BJ (cell line): ENCODE measurements at regions of chr4 and their contacts with region 1.

Region 1: DNA sequence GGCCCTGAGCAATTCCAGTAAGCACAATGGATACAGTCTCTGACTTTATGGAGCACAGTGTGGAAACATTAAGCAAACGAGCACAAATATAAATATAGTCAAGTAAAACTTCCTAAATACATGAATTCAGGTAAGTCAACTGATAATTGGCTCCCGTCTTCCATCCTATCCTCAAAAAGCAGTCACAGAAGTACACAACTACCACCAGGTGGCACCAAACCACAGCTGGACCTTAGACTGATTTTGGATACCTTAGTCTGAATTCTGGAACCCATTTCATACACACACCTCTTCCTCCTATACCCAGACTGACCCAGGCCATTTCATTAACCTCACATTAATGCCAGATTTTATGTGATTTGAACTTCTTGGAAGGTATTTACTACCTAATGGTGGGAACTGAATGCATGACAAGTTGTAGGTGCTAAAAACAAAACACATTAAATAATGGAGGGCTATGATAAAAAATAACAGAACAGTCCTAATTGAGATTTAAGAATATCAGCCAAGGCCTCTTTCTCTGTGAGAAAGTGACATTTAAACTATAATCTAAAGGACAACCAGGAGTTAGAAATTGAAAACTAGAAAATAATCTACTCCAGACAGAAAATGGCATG is 77.5 kb downstream of the ELF2 start:
- DNase-seq: no peak
- H3K4me3 ChIP-seq: no peak overlapping the region
- H3K27me3 ChIP-seq: no peaks in the 10 kb centered on the region
- CTCF ChIP-seq: peak; percentile 84

Region 2: DNA sequence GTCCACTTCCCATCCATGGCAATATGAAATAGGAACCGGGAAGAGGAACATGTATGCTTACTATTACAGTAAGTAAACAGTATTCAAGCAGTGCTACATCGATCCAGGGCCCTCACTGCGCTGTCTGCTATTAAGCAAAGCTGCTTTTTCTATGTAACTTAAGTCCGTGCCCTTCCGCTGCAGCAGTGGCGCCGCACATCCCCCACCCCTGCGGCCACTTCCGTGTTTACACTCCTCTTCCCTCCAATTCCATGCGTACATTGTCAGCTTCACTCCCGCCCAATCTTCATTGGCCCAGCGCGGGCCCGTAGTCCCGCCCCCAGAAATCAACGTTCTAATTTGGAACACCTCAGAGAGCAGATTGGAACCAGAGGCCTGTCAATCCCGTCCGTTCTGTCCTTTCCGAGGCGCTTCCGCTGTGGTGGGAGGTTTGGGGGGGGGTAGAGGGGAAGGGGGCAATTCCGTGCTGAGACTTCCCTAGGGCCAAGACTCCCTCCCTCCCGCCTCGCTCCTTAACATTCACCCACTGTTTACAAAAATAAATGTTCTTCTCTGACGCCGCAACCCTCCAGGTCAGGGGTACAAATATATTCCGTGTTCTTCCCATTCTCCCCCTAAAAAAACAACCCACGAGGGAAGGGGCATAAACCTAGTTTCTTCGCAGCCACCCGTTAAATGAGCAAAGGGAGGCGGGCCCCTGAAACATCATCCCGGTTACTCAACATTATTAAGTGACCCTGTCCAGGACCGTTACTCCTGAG is 16.5 kb before region 1 on chr4:
- CTCF ChIA-PET with region 1: interaction called, 18 read pairs
- POLR2A ChIA-PET with region 1: no interaction called
- DNase-seq: peak; percentile 95
- H3K4me3 ChIP-seq: peak overlapping the region; percentile 73
- H3K27me3 ChIP-seq: no peaks in the 10 kb centered on the region
- CTCF ChIP-seq: no peak

Region 3: GRCh38 chr4:139153420-139154133 is 54.1 kb after region 1 on chr4:
- CTCF ChIA-PET with region 1: no interaction called
- POLR2A ChIA-PET with region 1: no interaction called
- DNase-seq: no peak
- H3K4me3 ChIP-seq: no peak overlapping the region
- H3K27me3 ChIP-seq: no peaks in the 10 kb centered on the region
- CTCF ChIP-seq: no peak